Spleen (tissue), 13 donors: ENCODE measurements at regions of chrX and their contacts with region 1.

Region 1: GRCh38 chrX:130079824-130080406 is 30.4 kb downstream of the ELF4 start:
- DNase-seq: no peak
- H3K4me3 ChIP-seq: no peak overlapping the region
- H3K27ac ChIP-seq: peak overlapping the region in 1 of 8 donors; percentile 90
- H3K4me1 ChIP-seq: peaks cover 11 to 55% (median 42%) of the 10 kb centered on the region in 6 donors
- H3K27me3 ChIP-seq: no peaks in the 10 kb centered on the region
- CTCF ChIP-seq: peak; percentile 40 to 77 (median 68)
- POLR2A ChIP-seq: no peak

Region 2: GRCh38 chrX:130120746-130121504 is 41.0 kb after region 1 on chrX:
- intact Hi-C with region 1: loop called (anchors 5 kb)
- DNase-seq: peak; percentile 93
- H3K4me3 ChIP-seq: peak overlapping the region; percentile 15 to 67 (median 35)
- H3K27ac ChIP-seq: peak overlapping the region; percentile 55 to 92 (median 84)
- H3K4me1 ChIP-seq: peaks cover 0 to 38% (median 18%) of the 10 kb centered on the region in 6 donors
- H3K27me3 ChIP-seq: peaks cover 0 to 4% (median 0%) of the 10 kb centered on the region in 7 donors
- CTCF ChIP-seq: peak; percentile 47 to 88 (median 78)
- POLR2A ChIP-seq: no peak

Region 3: DNA sequence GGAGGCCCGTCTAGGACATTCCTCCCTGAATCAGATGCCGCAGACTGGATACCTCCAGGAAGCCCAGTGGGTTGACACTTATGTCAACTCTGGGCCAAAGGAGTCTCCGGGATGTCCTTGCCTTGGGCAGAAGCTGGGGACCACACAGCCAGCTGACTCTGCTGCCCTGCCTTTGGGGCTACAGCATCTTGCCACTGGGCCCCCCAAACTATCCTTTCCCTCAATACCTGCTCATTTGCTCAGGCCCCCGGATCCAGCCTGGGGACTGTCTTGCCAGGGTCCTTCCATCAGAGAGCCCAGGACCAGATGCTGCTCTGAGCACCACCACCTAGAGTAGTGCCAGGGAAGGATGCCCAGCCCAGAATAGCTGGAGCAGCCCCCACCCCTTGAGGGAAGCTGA is 110.9 kb after region 1 on chrX:
- intact Hi-C with region 1: loop called (anchors 5 kb)
- DNase-seq: no peak
- H3K4me3 ChIP-seq: no peak overlapping the region
- H3K27ac ChIP-seq: no peak overlapping the region
- H3K4me1 ChIP-seq: peaks cover 0 to 6% (median 0%) of the 10 kb centered on the region in 6 donors
- H3K27me3 ChIP-seq: no peaks in the 10 kb centered on the region
- CTCF ChIP-seq: no peak
- POLR2A ChIP-seq: no peak